ENCODE measurements at regions of chr1 and their contacts with region 1.

Region 1: GRCh38 chr1:23098463-23099170 is 70.0 kb downstream of the LUZP1 start:
- DNase-seq: peak; percentile 76
- ATAC-seq: peak; percentile 51
- H3K4me3 Mint-ChIP-seq: peak overlapping the region; percentile 1
- H3K27ac Mint-ChIP-seq: peak overlapping the region; percentile 17
- H3K4me1 Mint-ChIP-seq: peaks cover 42% of the 10 kb centered on the region
- H3K27me3 Mint-ChIP-seq: no peaks in the 10 kb centered on the region
- CTCF ChIP-seq: peak; percentile 93

Region 2: GRCh38 chr1:23066075-23066474 is 32.5 kb before region 1 on chr1:
- CTCF ChIA-PET with region 1: no interaction called
- POLR2A ChIA-PET with region 1: no interaction called
- intact Hi-C with region 1: no loop called
- DNase-seq: no peak
- ATAC-seq: no peak
- H3K4me3 Mint-ChIP-seq: no peak overlapping the region
- H3K27ac Mint-ChIP-seq: no peak overlapping the region
- H3K4me1 Mint-ChIP-seq: peaks cover 10% of the 10 kb centered on the region
- H3K27me3 Mint-ChIP-seq: no peaks in the 10 kb centered on the region
- CTCF ChIP-seq: no peak

Region 3: DNA sequence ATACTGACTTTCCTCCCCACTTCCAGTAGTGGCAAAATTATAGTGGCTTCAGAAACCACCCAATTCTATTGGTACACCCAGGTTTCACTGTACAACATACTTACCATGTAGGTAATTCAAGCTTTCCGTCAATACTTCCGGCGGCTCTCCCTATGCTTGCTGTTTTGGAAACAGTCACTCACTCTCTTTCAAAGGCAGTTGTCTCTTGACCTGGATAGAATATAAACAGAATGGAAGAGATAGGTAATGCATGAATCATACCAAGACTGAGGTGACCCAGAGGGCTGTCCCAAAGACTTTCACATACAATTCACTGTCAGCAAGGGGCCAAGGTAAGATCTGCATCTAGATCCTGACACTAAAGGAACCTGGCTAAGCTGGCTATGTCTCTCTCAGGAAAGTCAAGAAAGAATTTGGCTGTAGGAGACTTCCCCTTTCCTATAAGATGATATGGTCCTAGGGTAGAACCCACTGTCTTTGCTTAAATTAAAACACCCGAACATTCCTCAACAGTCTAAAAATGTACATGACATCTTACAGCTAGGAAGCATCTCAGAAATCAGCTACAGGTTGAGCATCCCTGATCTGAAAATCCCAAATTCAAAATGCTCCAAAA is 10.4 kb after region 1 on chr1:
- CTCF ChIA-PET with region 1: interaction called, 72 read pairs
- POLR2A ChIA-PET with region 1: interaction called, 5 read pairs
- intact Hi-C with region 1: no loop called
- DNase-seq: peak; percentile 45
- ATAC-seq: peak; percentile 12
- H3K4me3 Mint-ChIP-seq: no peak overlapping the region
- H3K27ac Mint-ChIP-seq: no peak overlapping the region
- H3K4me1 Mint-ChIP-seq: peaks cover 49% of the 10 kb centered on the region
- H3K27me3 Mint-ChIP-seq: no peaks in the 10 kb centered on the region
- CTCF ChIP-seq: no peak

Region 4: GRCh38 chr1:23122023-23122748 is 23.6 kb after region 1 on chr1:
- CTCF ChIA-PET with region 1: interaction called, 22 read pairs
- POLR2A ChIA-PET with region 1: no interaction called
- intact Hi-C with region 1: no loop called
- DNase-seq: no peak
- ATAC-seq: no peak
- H3K4me3 Mint-ChIP-seq: no peak overlapping the region
- H3K27ac Mint-ChIP-seq: no peak overlapping the region
- H3K4me1 Mint-ChIP-seq: peaks cover 41% of the 10 kb centered on the region
- H3K27me3 Mint-ChIP-seq: no peaks in the 10 kb centered on the region
- CTCF ChIP-seq: no peak

Region 5: GRCh38 chr1:23132033-23132432 is 33.4 kb after region 1 on chr1:
- CTCF ChIA-PET with region 1: interaction called, 13 read pairs
- POLR2A ChIA-PET with region 1: interaction called, 3 read pairs
- intact Hi-C with region 1: no loop called
- DNase-seq: no peak
- ATAC-seq: peak; percentile 73
- H3K4me3 Mint-ChIP-seq: no peak overlapping the region
- H3K27ac Mint-ChIP-seq: no peak overlapping the region
- H3K4me1 Mint-ChIP-seq: peaks cover 11% of the 10 kb centered on the region
- H3K27me3 Mint-ChIP-seq: no peaks in the 10 kb centered on the region
- CTCF ChIP-seq: no peak

Region 6: DNA sequence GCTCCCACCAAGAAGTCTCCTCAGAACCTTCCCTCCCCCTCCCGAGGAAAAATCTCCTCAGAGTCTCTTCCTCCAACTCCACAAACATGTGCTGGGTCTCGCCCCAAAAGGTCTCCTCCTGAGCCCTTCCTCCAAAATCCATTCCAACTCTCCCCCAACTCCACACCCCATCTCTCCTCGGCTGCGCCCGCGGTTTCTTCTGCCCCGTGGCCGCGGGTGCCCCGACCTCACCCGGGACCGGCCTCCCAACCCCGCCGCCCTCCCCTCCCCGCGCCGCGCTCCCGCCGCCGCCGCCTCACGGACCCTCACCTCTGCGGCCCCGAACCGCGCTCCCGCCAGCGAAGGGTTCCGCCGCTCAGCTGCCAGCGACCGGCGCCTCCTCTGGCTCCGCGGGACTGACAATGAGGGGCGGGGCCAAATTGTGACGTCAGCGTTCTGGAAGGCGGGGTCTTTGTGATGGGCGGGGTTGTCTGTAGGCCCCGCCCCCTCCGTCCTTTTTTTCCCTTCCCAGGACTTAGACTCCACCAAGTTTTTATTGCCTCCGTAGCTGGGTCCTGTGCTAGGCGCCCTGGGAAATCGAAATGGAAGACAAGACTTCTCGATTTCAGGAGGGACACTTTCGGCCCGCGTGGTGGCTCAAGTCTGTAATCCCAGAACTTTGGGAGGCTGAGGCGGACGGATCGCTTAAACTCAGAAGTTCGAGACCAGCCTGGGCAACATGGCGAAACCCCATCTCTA is 70.0 kb after region 1 on chr1 and contains the start of gene LUZP1:
- CTCF ChIA-PET with region 1: interaction called, 748 read pairs
- POLR2A ChIA-PET with region 1: interaction called, 11 read pairs
- intact Hi-C with region 1: no loop called
- DNase-seq: peak; percentile 90
- ATAC-seq: peak; percentile 92
- H3K4me3 Mint-ChIP-seq: peak within 1 kb of the TSS; percentile 97
- H3K27ac Mint-ChIP-seq: peak within 1 kb of the TSS; percentile 92
- H3K4me1 Mint-ChIP-seq: peaks cover 37% of the 10 kb centered on the region
- H3K27me3 Mint-ChIP-seq: no peaks in the 10 kb centered on the region
- CTCF ChIP-seq: no peak
- total RNA-seq, gene LUZP1: 14.9 to 16.0 TPM

Region 7: GRCh38 chr1:23177438-23178380 is 79.1 kb after region 1 on chr1:
- CTCF ChIA-PET with region 1: interaction called, 748 read pairs
- POLR2A ChIA-PET with region 1: interaction called, 24 read pairs
- intact Hi-C with region 1: no loop called
- DNase-seq: peak; percentile 69
- ATAC-seq: peak; percentile 69
- H3K4me3 Mint-ChIP-seq: peak overlapping the region; percentile 63
- H3K27ac Mint-ChIP-seq: no peak overlapping the region
- H3K4me1 Mint-ChIP-seq: peaks cover 16% of the 10 kb centered on the region
- H3K27me3 Mint-ChIP-seq: peaks cover 25% of the 10 kb centered on the region
- CTCF ChIP-seq: no peak

Region 8: GRCh38 chr1:23196639-23197328 is 98.2 kb after region 1 on chr1:
- CTCF ChIA-PET with region 1: interaction called, 11 read pairs
- POLR2A ChIA-PET with region 1: interaction called, 3 read pairs
- intact Hi-C with region 1: no loop called
- DNase-seq: no peak
- ATAC-seq: no peak
- H3K4me3 Mint-ChIP-seq: no peak overlapping the region
- H3K27ac Mint-ChIP-seq: no peak overlapping the region
- H3K4me1 Mint-ChIP-seq: no peaks in the 10 kb centered on the region
- H3K27me3 Mint-ChIP-seq: peaks cover 9% of the 10 kb centered on the region
- CTCF ChIP-seq: no peak

Measured in activated CD8-positive, alpha-beta T cell treated with anti-CD3 and anti-CD28 coated beads for 36 hours (primary cell).